ENCODE measurements at regions of chr18 and their contacts with region 1.

Region 1: GRCh38 chr18:10726198-10726965 is 200.6 kb downstream of the NAPG start:
- DNase-seq: no peak
- ATAC-seq: no peak
- H3K4me3 ChIP-seq: no peak overlapping the region
- H3K27ac ChIP-seq: no peak overlapping the region
- H3K4me1 ChIP-seq: no peaks in the 10 kb centered on the region
- H3K27me3 ChIP-seq: no peaks in the 10 kb centered on the region

Region 2: GRCh38 chr18:10660179-10660884 is 66.0 kb before region 1 on chr18:
- intact Hi-C with region 1: loop called in 1 of 2 experiments (anchors 10 kb)
- DNase-seq: peak in 1 of 2 donors; percentile 65
- ATAC-seq: peak; percentile 75
- H3K4me3 ChIP-seq: no peak overlapping the region
- H3K27ac ChIP-seq: no peak overlapping the region
- H3K4me1 ChIP-seq: no peaks in the 10 kb centered on the region
- H3K27me3 ChIP-seq: no peaks in the 10 kb centered on the region

Measured in aorta (tissue), 5 donors.